Activated CD4-positive, alpha-beta T cell treated with anti-CD3 and anti-CD28 coated beads for 36 hours (primary cell): ENCODE measurements at regions of chr22 and their contacts with region 1.

Region 1: DNA sequence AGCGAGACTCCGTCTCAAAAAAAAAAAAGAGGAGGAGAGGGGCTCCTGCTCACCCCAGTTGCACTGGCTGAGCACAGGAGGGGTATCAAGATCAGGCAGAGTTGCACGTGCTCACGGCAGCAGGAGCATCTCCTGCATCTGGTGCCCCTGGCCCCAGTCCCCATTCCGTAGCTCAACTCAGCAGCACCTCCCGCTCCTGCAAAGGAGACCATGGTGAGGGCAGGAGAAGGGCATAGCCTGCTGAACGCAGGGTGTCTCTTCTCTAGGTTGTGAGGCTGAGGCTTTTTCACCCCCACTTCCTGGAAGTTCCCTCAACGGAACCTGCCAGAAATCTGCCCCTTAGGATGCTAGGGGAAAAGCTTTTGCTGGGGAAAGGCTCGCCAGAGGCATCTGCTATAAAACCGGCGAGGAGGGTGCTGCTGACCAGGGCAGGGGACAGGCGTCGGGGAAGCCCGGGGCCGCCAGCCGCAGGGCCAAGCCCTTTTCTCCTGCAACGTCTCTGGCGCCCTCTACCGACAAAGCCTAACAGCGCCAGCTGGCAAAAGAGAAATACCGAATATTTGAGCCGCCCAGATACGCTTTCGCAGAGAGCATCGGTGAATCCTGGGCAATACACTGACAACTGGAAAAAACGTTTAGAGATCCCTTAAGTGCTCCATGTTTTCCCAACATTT is 1.0 kb upstream of the PPP6R2 start:
- DNase-seq: peak; percentile 95
- ATAC-seq: peak; percentile 64
- H3K4me3 Mint-ChIP-seq: peak overlapping the region; percentile 71
- H3K27ac Mint-ChIP-seq: peak overlapping the region; percentile 83
- H3K4me1 Mint-ChIP-seq: peaks cover 7% of the 10 kb centered on the region
- H3K27me3 Mint-ChIP-seq: no peaks in the 10 kb centered on the region

Region 2: GRCh38 chr22:50016988-50017700 is 325.0 kb before region 1 on chr22:
- CTCF ChIA-PET with region 1: no interaction called
- POLR2A ChIA-PET with region 1: no interaction called
- intact Hi-C with region 1: loop called in 1 of 2 experiments (anchors 5 kb)
- DNase-seq: peak; percentile 93
- ATAC-seq: peak; percentile 64
- H3K4me3 Mint-ChIP-seq: peak overlapping the region; percentile 60
- H3K27ac Mint-ChIP-seq: peak overlapping the region; percentile 96
- H3K4me1 Mint-ChIP-seq: no peaks in the 10 kb centered on the region
- H3K27me3 Mint-ChIP-seq: no peaks in the 10 kb centered on the region

Region 3: DNA sequence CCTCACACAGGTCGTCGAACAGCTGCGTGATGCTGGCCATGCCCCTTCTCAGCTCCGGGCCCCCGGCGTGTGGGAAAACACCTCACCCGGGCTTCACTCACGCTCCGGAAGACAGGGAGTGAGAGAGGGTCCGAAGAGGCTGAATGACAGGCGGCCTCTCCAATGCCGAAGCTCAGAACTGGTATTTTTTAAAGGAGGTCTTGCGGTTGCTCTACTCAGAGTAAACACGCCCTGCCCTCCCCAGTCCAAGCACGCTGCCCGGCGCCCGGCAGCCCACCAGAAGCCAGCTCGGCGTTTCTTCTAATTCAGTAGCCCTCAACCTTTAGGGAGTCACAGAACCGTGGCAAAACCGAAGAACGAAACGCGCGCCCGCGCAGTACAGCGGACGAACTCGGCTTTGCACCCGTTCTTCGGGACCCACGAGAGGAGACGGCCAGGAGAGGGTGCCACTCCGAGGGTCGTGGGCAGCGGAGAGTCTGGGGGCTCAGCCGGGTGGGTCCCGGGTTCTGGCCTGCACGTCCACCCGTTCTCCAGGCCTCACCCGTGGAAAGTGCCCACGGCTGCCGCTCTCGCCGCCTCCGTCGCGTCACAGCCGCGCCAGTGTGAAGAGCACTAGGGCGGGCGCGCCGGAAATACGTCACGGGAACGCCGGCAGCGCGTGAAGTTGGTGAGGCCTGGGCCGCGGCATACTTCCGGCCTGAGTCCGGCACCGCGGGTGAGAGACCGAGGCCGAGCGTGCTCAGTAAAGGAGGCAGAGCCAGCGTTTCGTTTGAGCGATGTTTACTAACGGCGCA is 97.5 kb before region 1 on chr22 and contains the start of gene TUBGCP6:
- CTCF ChIA-PET with region 1: interaction called, 11 read pairs
- POLR2A ChIA-PET with region 1: no interaction called
- intact Hi-C with region 1: loop called (anchors 1 kb)
- DNase-seq: peak; percentile 96
- ATAC-seq: peak; percentile 80
- H3K4me3 Mint-ChIP-seq: peak within 1 kb of the TSS; percentile 94
- H3K27ac Mint-ChIP-seq: peak within 1 kb of the TSS; percentile 100
- H3K4me1 Mint-ChIP-seq: peaks cover 23% of the 10 kb centered on the region
- H3K27me3 Mint-ChIP-seq: no peaks in the 10 kb centered on the region
- total RNA-seq, gene TUBGCP6: 42.2 to 49.2 TPM

Region 4: GRCh38 chr22:50276143-50276542 is 66.0 kb before region 1 on chr22:
- CTCF ChIA-PET with region 1: interaction called, 16 read pairs
- POLR2A ChIA-PET with region 1: no interaction called
- intact Hi-C with region 1: loop called (anchors 1 kb)
- DNase-seq: peak; percentile 81
- ATAC-seq: peak; percentile 70
- H3K4me3 Mint-ChIP-seq: no peak overlapping the region
- H3K27ac Mint-ChIP-seq: no peak overlapping the region
- H3K4me1 Mint-ChIP-seq: peaks cover 1% of the 10 kb centered on the region
- H3K27me3 Mint-ChIP-seq: peaks cover 2% of the 10 kb centered on the region

Region 5: DNA sequence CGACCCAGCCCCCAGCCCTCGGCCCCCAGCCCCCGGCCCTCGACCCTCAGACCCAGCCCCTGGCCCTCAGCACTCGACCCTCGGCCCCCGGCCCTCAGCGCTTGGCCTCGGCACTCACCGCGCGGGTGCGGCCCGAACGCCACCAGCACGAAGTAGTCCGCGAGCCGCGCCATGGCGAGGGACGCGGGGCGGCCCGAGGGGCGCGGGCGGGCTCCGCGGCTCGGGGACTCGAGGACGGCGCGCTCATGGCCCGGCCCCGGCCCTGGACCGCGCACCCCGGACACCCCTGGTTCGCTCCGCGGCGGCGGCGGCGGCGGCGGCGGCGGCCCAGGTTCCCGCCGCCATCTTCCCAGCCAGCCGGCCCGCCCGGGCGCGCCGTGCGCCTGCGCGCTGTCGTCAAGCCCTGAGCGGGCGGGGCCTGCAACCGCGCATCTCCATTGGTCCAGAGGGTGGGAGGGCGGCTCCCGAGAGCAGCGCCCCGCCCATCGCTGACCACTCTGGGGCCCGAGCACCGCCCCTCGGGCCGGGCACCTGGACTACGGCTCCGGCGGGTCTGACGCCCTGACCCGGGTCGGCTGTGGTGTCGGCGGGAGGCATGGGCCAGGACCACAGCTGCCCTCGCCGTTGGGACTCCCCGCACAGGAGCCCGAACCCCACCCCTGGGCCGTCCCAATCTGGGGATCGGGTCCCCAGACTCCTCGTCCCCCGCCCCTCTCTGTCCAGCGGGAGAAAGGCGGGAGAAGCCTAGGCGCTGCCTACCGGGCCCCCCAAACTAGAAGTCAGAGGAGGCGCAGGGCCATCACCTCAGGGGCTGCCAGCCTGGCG is 132.8 kb after region 1 on chr22 and contains the start of gene SBF1:
- CTCF ChIA-PET with region 1: no interaction called
- POLR2A ChIA-PET with region 1: no interaction called
- intact Hi-C with region 1: loop called in 1 of 2 experiments (anchors 2 kb)
- DNase-seq: peak; percentile 95
- ATAC-seq: peak; percentile 78
- H3K4me3 Mint-ChIP-seq: peak within 1 kb of the TSS; percentile 89
- H3K27ac Mint-ChIP-seq: peak within 1 kb of the TSS; percentile 83
- H3K4me1 Mint-ChIP-seq: peaks cover 42% of the 10 kb centered on the region
- H3K27me3 Mint-ChIP-seq: peaks cover 2% of the 10 kb centered on the region
- total RNA-seq, gene SBF1: 97.6 TPM

Region 6: DNA sequence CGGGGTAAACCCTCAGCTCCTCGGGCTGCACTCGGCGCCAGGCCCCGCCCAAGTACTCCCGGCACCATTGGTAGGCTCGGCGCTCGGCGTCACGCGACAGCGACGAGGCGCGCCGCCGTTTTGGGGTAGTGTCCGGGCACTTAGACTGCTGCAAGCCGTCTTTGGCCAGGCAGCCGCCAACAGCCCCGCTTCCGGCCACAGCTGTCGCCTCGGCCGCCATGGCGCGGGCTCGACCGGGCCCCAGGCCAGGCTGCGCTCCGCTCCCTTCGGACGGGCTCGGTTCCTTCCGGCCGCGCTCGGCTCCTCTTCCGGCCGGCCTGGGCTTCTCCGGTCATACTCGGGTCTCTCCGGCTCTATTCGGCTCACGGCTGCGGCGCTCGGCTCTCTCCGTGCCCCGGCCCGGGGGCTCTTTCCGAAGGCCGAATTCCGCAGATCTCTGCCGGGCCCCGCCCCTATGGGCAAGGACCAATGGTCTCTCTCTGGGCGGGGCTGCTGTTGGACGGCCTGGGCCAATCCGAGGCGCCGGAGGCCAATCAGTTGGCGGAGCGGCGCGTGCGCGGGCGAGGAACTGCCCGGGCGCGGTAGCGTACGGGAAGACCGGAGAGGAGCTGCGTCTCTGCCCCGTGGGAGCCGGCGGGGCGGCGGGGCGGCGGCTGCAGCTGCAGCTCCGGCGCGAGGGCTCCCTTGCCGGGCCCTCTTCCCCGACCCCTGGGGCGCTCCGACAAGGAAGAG is 240.6 kb after region 1 on chr22 and contains the start of gene CHKB:
- CTCF ChIA-PET with region 1: no interaction called
- POLR2A ChIA-PET with region 1: no interaction called
- intact Hi-C with region 1: loop called in 1 of 2 experiments (anchors 2 kb)
- DNase-seq: peak; percentile 99
- ATAC-seq: peak; percentile 97
- H3K4me3 Mint-ChIP-seq: peak within 1 kb of the TSS; percentile 86
- H3K27ac Mint-ChIP-seq: peak within 1 kb of the TSS; percentile 84
- H3K4me1 Mint-ChIP-seq: peaks cover 25% of the 10 kb centered on the region
- H3K27me3 Mint-ChIP-seq: no peaks in the 10 kb centered on the region
- total RNA-seq, gene CHKB: 68.2 to 79.7 TPM